Naive thymus-derived CD4-positive, alpha-beta T cell (primary cell): ENCODE measurements at regions of chr1 and their contacts with region 1.

Region 1: DNA sequence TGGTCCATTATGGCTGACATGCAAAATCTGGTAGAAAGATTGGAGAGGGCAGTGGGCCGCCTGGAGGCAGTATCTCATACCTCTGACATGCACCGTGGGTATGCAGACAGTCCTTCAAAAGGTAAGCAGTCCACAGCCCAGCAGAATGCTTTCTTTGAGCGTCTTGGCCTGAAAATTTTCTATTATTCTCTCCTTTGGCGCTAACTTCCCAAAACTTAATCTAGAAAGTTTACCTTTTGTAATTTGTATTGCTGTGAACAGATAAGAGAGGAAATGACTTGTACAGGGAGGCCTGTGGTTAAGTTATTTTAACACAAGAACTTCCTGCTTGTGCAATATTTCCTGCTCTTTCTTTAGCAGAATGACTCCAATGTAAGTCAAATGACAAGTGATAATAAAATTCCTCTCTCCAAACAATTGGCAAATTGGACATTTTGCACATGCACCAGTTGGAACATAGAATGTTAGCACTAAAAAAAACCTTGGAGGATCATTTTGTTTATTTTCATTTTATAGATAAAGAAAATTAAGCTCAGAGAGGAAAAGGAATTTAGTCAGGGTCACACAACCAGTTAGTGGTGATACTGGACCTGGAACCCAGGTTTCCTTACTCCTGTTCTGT is 18.9 kb downstream of the CAP1 start:
- DNase-seq: peak in 7 of 9 donors; percentile 33 to 65 (median 56)
- ATAC-seq: peak; percentile 83
- H3K4me3 ChIP-seq: peak overlapping the region; percentile 21
- H3K4me3 Mint-ChIP-seq: peak overlapping the region; percentile 65 to 90 (median 82)
- H3K27ac ChIP-seq: peak overlapping the region; percentile 77
- H3K27ac Mint-ChIP-seq: peak overlapping the region; percentile 79 to 97 (median 88)
- H3K4me1 ChIP-seq: peaks cover 64 to 87% of the 10 kb centered on the region in 2 donors
- H3K4me1 Mint-ChIP-seq: peaks cover 79 to 99% (median 91%) of the 10 kb centered on the region in 7 donors
- H3K27me3 ChIP-seq: no peaks in the 10 kb centered on the region
- H3K27me3 Mint-ChIP-seq: no peaks in the 10 kb centered on the region

Region 2: GRCh38 chr1:39799770-39800470 is 259.5 kb before region 1 on chr1:
- CTCF ChIA-PET with region 1: no interaction called
- POLR2A ChIA-PET with region 1: interaction called, 10 read pairs
- intact Hi-C with region 1: no loop called
- DNase-seq: peak; percentile 23 to 76 (median 44)
- ATAC-seq: peak; percentile 79
- H3K4me3 ChIP-seq: peak overlapping the region; percentile 48
- H3K4me3 Mint-ChIP-seq: peak overlapping the region; percentile 42 to 76 (median 73)
- H3K27ac ChIP-seq: peak overlapping the region; percentile 22
- H3K27ac Mint-ChIP-seq: peak overlapping the region in 6 of 9 donors; percentile 38 to 94 (median 82)
- H3K4me1 ChIP-seq: peaks cover 4 to 7% of the 10 kb centered on the region in 2 donors
- H3K4me1 Mint-ChIP-seq: peaks cover 0 to 17% (median 11%) of the 10 kb centered on the region in 7 donors
- H3K27me3 ChIP-seq: no peaks in the 10 kb centered on the region
- H3K27me3 Mint-ChIP-seq: peaks cover 0 to 2% (median 0%) of the 10 kb centered on the region in 5 donors

Region 3: GRCh38 chr1:40072142-40072541 is 12.7 kb after region 1 on chr1:
- CTCF ChIA-PET with region 1: interaction called, 5 read pairs
- POLR2A ChIA-PET with region 1: interaction called, 15 read pairs
- intact Hi-C with region 1: no loop called
- DNase-seq: no peak
- ATAC-seq: no peak
- H3K4me3 ChIP-seq: no peak overlapping the region
- H3K4me3 Mint-ChIP-seq: no peak overlapping the region
- H3K27ac ChIP-seq: no peak overlapping the region
- H3K27ac Mint-ChIP-seq: peak overlapping the region in 8 of 9 donors; percentile 50 to 92 (median 78)
- H3K4me1 ChIP-seq: peaks cover 0 to 5% of the 10 kb centered on the region in 2 donors
- H3K4me1 Mint-ChIP-seq: peaks cover 2 to 34% (median 21%) of the 10 kb centered on the region in 7 donors
- H3K27me3 ChIP-seq: no peaks in the 10 kb centered on the region
- H3K27me3 Mint-ChIP-seq: no peaks in the 10 kb centered on the region

Region 4: GRCh38 chr1:40078512-40079333 is 19.3 kb after region 1 on chr1:
- CTCF ChIA-PET with region 1: interaction called, 5 read pairs
- POLR2A ChIA-PET with region 1: interaction called, 8 read pairs
- intact Hi-C with region 1: loop called in 1 of 2 experiments (anchors 1 kb)
- DNase-seq: peak in 8 of 9 donors; percentile 13 to 59 (median 48)
- ATAC-seq: peak; percentile 88
- H3K4me3 ChIP-seq: no peak overlapping the region
- H3K4me3 Mint-ChIP-seq: no peak overlapping the region
- H3K27ac ChIP-seq: no peak overlapping the region
- H3K27ac Mint-ChIP-seq: peak overlapping the region in 6 of 9 donors; percentile 34 to 91 (median 66)
- H3K4me1 ChIP-seq: no peaks in the 10 kb centered on the region
- H3K4me1 Mint-ChIP-seq: peaks cover 0 to 24% (median 13%) of the 10 kb centered on the region in 7 donors
- H3K27me3 ChIP-seq: no peaks in the 10 kb centered on the region
- H3K27me3 Mint-ChIP-seq: no peaks in the 10 kb centered on the region